Ovary (tissue), 10 donors: ENCODE measurements at regions of chr1 and their contacts with region 1.

Region 1: DNA sequence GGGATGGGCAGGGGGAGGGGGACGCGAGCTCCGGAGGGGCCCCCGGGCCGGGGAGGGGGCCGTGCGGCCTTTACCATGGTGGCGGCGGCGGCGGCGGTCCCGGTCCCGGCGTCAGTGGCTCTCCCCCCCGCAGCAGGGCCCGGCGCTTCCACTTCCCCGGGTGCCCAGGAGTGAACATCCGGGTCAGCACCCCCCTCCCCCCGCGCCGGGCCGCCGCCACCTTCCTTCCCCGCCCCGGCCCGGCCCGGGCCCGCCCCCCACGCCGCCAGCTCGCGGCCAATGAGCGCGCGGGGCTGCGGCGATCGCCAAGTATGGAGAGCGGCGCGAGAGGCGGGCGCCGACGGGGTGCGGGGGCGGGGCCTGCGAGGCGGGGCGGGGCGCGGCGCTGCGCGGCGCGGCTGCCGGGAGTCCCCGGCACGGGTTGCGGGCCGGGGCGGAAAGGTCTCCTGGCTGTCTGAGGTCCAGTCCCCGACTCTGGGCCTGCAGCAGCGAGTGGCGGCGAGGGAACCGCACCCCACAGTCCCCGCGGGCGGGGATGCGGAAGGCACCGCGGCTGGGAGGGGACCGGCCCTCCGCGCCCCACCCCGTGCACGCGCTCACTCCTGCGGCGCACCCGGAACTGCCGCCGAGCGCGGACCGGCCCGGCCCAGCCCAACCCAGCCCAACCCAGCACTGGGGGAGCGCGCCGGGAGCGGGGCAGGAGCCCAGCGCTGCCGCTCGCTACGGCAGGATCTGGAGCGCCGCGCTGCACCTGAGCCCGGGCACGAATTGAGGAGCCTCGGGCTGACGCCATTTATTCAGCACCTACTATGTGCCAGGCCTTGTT is at the start of gene CAPZB:
- DNase-seq: peak; percentile 95 to 97 (median 96)
- H3K4me3 ChIP-seq: peak within 1 kb of the TSS; percentile 98
- H3K27ac ChIP-seq: peak within 1 kb of the TSS; percentile 92 to 94
- H3K4me1 ChIP-seq: peaks cover 29% of the 10 kb centered on the region
- H3K27me3 ChIP-seq: no peaks in the 10 kb centered on the region
- CTCF ChIP-seq: no peak
- EP300 ChIP-seq: no peak
- POLR2A ChIP-seq: peak; percentile 86
- total RNA-seq, gene CAPZB: 85.0 to 347 (median 258) TPM

Region 2: DNA sequence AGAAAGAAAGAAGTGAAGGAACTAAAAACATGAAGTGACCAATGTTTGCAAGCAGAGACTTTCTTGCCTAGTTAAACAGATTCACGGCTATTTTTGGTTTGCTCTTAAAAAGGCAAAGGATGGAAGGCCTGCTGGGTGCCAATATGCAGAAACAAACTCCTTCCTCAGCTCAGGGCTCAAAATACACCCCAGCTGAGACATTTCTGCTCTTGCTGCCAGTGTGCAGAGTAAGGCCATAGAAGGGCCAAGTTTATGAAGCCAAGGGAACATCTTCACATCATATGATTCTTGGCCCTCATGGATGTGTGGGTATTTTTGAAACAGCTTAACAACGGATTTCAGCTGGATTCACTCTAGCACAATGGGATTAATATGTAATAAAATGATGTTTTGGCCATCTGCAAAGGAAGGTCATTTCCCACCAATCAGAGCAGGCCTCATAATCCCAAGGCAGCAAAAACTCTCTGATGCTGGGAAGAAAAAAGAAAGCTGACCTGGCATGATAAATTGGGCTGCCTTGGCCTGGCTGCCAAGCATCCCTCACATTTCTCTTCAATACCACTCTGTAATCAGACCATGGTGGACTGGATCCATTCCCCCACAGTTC is 71.0 kb before region 1 on chr1:
- intact Hi-C with region 1: no loop called
- DNase-seq: peak in 1 of 5 donors; percentile 61
- H3K4me3 ChIP-seq: no peak overlapping the region
- H3K27ac ChIP-seq: peak overlapping the region in 1 of 2 donors; percentile 72
- H3K4me1 ChIP-seq: peaks cover 36% of the 10 kb centered on the region
- H3K27me3 ChIP-seq: no peaks in the 10 kb centered on the region
- CTCF ChIP-seq: no peak
- EP300 ChIP-seq: no peak
- POLR2A ChIP-seq: no peak

Region 3: GRCh38 chr1:19439464-19440171 is 46.0 kb before region 1 on chr1:
- intact Hi-C with region 1: loop called in 2 of 4 experiments (anchors 5 to 10 kb)
- DNase-seq: peak in 4 of 5 donors; percentile 61 to 75 (median 71)
- H3K4me3 ChIP-seq: no peak overlapping the region
- H3K27ac ChIP-seq: peak overlapping the region; percentile 82 to 95
- H3K4me1 ChIP-seq: peaks cover 52% of the 10 kb centered on the region
- H3K27me3 ChIP-seq: no peaks in the 10 kb centered on the region
- CTCF ChIP-seq: peak in 1 of 3 donors; percentile 24
- EP300 ChIP-seq: no peak
- POLR2A ChIP-seq: no peak

Region 4: DNA sequence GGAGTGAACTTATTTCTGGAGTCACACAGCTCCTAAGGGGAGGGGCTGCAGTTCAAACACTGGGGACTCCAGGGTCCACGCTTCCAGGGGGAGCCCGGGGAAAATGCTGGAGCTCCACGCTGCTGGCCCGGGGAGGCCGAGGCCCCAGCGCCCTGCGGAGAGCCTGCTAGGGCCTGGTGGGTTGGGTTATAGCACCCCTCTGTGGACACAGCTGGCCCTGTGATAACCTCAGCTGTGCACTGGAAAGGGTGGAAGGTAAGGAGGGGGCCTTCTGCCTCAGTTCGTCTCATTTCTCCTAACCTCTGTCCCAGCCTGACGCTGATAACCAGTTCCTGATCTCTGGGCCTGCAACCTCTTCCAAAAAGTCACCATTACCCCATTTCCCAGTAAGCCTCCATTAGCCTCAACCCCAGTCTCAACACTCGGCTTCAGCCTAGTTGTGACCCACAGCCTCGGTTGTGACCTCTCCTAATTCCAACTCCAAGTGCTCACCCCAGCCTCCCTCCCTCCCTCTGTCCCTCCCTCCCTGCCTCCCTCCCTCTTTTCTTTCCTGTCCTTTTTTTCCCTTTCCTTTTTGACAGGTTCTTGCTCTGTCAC is 165.7 kb after region 1 on chr1:
- intact Hi-C with region 1: loop called in 3 of 4 experiments (anchors 2 to 10 kb)
- DNase-seq: peak; percentile 63 to 79 (median 75)
- H3K4me3 ChIP-seq: peak overlapping the region; percentile 3
- H3K27ac ChIP-seq: peak overlapping the region; percentile 50 to 80
- H3K4me1 ChIP-seq: peaks cover 42% of the 10 kb centered on the region
- H3K27me3 ChIP-seq: no peaks in the 10 kb centered on the region
- CTCF ChIP-seq: peak in 2 of 3 donors; percentile 61 to 76
- EP300 ChIP-seq: no peak
- POLR2A ChIP-seq: no peak

Region 5: DNA sequence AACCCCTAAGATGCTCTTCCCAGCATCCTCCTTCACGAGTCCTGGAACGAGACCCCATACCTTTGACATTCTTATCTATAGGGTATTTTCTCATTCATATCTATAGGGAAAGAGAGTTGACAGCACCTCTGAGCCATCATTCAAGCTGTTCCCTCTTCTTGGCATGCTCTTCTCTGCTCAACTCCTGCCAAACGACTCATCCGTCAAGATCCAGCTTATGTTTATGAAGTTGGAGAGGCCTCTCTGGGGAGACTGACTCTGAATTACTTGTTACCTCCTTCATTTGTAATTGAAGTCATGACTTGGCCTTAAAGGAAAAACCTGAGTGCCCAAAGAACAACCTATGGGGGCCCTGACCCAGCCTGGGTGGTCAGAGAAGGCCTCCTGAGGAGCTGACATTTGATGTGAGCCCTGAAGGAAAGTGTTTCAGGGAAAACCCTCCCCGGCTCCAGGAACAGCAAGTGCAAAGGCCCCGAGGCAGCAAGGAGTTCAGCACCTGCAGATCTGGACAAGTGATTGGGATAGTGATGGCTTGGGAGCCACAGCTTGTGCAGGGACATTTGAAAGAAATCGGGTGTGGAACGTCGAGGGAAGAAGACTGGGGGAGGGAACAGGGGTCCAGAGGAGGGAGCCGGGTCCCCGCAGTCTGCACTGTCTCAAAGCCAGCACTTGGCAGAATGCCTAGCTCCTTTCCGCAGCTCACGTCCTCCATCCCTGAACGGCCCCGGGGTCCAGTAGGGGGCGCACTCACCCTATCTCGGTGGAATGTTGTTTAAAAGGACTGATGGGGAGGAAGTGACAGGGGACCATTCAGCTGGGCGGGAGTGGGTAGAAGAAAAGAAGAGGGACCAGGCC is 1089.3 kb after region 1 on chr1:
- intact Hi-C with region 1: no loop called
- DNase-seq: peak; percentile 18 to 62 (median 56)
- H3K4me3 ChIP-seq: no peak overlapping the region
- H3K27ac ChIP-seq: no peak overlapping the region
- H3K4me1 ChIP-seq: no peaks in the 10 kb centered on the region
- H3K27me3 ChIP-seq: no peaks in the 10 kb centered on the region
- CTCF ChIP-seq: no peak
- EP300 ChIP-seq: no peak
- POLR2A ChIP-seq: no peak